Activated B cell treated with CpG ODN at 0.5 μM for 24 hours (primary cell): ENCODE measurements at regions of chr2 and their contacts with region 1.

Region 1: DNA sequence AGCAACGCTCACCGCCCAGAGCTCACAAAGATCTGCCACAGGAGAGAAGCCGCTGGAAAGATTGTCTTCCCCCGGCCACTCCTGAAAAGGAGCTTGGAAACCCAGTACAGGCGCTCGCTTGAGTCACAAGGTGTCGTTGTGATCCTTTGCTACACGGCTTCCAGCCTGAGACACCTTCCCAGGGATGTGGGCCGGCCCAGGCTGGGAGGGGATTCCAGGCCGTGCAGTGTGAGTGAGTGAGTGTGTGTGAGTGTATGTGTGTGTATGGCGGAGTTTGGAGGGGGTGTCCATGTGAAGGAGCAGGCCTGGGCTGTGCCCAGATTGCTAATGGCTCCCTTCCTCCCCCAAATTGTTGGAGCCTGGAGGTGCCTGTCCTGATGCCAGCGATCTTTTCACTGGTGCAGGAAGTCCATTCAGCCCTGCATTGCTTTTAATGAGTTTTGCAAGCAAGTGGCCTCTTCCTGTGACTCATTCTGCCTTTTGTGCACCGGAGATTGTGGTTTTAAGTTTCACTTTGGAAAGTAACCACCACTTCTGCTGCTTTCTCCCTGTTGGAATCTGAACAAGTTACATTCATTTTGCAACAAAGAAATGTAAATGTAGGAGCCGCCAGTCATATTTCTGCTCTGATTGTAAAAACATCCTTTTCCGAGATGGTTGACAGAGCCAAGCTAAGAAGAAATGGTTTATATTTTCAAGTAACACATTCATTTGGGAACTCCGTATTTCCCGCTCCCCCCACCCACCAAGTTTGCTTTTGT is 83.7 kb downstream of the LPIN1 start:
- DNase-seq: peak; percentile 40
- ATAC-seq: peak; percentile 66
- H3K4me3 Mint-ChIP-seq: peak overlapping the region; percentile 75
- H3K27ac Mint-ChIP-seq: peak overlapping the region; percentile 75
- H3K4me1 Mint-ChIP-seq: peaks cover 64% of the 10 kb centered on the region
- H3K27me3 Mint-ChIP-seq: no peaks in the 10 kb centered on the region
- CTCF ChIP-seq: no peak

Region 2: GRCh38 chr2:11802782-11803191 is 27.3 kb before region 1 on chr2:
- CTCF ChIA-PET with region 1: no interaction called
- POLR2A ChIA-PET with region 1: no interaction called
- intact Hi-C with region 1: no loop called
- DNase-seq: no peak
- ATAC-seq: no peak
- H3K4me3 Mint-ChIP-seq: no peak overlapping the region
- H3K27ac Mint-ChIP-seq: no peak overlapping the region
- H3K4me1 Mint-ChIP-seq: no peaks in the 10 kb centered on the region
- H3K27me3 Mint-ChIP-seq: no peaks in the 10 kb centered on the region
- CTCF ChIP-seq: no peak

Region 3: GRCh38 chr2:11904029-11904428 is 73.9 kb after region 1 on chr2:
- CTCF ChIA-PET with region 1: no interaction called
- POLR2A ChIA-PET with region 1: no interaction called
- intact Hi-C with region 1: loop called (anchors 2 kb)
- DNase-seq: peak; percentile 29
- ATAC-seq: peak; percentile 98
- H3K4me3 Mint-ChIP-seq: no peak overlapping the region
- H3K27ac Mint-ChIP-seq: peak overlapping the region; percentile 67
- H3K4me1 Mint-ChIP-seq: peaks cover 24% of the 10 kb centered on the region
- H3K27me3 Mint-ChIP-seq: no peaks in the 10 kb centered on the region
- CTCF ChIP-seq: no peak

Region 4: GRCh38 chr2:12044857-12045256 is 214.7 kb after region 1 on chr2:
- CTCF ChIA-PET with region 1: interaction called, 4 read pairs
- POLR2A ChIA-PET with region 1: no interaction called
- intact Hi-C with region 1: loop called (anchors 5 kb)
- DNase-seq: no peak
- ATAC-seq: peak; percentile 89
- H3K4me3 Mint-ChIP-seq: peak overlapping the region; percentile 44
- H3K27ac Mint-ChIP-seq: peak overlapping the region; percentile 68
- H3K4me1 Mint-ChIP-seq: peaks cover 97% of the 10 kb centered on the region
- H3K27me3 Mint-ChIP-seq: no peaks in the 10 kb centered on the region
- CTCF ChIP-seq: no peak

Region 5: DNA sequence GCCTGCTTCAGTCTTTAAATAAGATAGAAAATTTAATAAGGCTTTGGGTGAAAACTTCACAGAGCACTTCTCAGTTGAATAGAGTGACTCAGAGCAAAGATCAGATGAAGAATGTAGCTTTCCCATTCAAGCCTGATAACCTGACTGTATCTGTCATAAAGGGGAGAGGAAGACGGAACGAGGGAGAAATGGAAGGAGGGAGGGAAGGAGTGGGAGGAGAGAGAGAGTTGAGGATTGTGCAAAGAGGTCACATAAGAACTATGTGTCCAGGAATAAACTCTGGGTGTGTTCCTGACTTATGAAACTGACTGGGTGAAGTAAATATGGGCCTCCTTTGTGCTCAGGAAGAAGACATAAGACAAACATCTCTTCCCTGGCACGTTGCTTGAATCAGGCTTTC is 301.8 kb after region 1 on chr2:
- CTCF ChIA-PET with region 1: no interaction called
- POLR2A ChIA-PET with region 1: no interaction called
- intact Hi-C with region 1: no loop called
- DNase-seq: no peak
- ATAC-seq: no peak
- H3K4me3 Mint-ChIP-seq: no peak overlapping the region
- H3K27ac Mint-ChIP-seq: no peak overlapping the region
- H3K4me1 Mint-ChIP-seq: no peaks in the 10 kb centered on the region
- H3K27me3 Mint-ChIP-seq: no peaks in the 10 kb centered on the region
- CTCF ChIP-seq: no peak

Region 6: DNA sequence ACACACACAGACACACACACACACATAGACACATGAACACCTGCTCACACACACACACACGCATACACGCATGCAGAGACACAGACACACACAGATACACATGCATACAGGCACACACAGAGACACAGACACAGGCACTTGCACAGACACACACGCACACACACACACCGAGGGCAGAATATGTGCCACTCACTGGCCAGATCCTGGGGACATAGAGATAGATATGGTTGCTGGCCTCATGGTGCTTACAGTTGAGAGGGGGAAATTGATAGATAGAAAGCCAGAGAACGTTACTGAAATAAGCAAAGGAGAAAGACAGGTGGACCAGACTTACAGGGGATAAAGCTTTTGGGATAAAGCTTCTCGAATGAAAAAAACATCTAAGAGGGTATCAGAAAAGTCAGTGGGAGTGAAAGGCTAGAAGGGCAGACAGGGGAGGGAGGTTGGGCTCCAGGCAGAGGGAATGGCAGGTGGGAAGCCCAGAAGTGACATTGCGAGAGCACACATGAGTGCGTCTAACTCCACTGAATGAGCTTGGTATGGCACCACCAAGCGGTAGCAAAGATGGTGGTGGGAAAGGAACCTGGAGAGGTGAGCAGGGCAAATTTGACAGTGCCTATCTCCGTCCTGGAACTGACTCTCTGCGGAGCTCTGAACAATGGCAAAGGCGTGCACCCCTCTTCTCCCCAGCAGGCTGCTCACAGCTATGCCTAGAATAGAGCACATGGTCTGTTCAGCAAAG is 496.5 kb after region 1 on chr2:
- CTCF ChIA-PET with region 1: interaction called, 5 read pairs
- POLR2A ChIA-PET with region 1: no interaction called
- intact Hi-C with region 1: loop called (anchors 1 kb)
- DNase-seq: no peak
- ATAC-seq: no peak
- H3K4me3 Mint-ChIP-seq: no peak overlapping the region
- H3K27ac Mint-ChIP-seq: no peak overlapping the region
- H3K4me1 Mint-ChIP-seq: peaks cover 26% of the 10 kb centered on the region
- H3K27me3 Mint-ChIP-seq: no peaks in the 10 kb centered on the region
- CTCF ChIP-seq: no peak

Region 7: GRCh38 chr2:12416600-12416999 is 586.5 kb after region 1 on chr2:
- CTCF ChIA-PET with region 1: no interaction called
- POLR2A ChIA-PET with region 1: no interaction called
- intact Hi-C with region 1: loop called (anchors 10 kb)
- DNase-seq: peak; percentile 22
- ATAC-seq: peak; percentile 69
- H3K4me3 Mint-ChIP-seq: no peak overlapping the region
- H3K27ac Mint-ChIP-seq: no peak overlapping the region
- H3K4me1 Mint-ChIP-seq: peaks cover 36% of the 10 kb centered on the region
- H3K27me3 Mint-ChIP-seq: no peaks in the 10 kb centered on the region
- CTCF ChIP-seq: no peak

Region 8: DNA sequence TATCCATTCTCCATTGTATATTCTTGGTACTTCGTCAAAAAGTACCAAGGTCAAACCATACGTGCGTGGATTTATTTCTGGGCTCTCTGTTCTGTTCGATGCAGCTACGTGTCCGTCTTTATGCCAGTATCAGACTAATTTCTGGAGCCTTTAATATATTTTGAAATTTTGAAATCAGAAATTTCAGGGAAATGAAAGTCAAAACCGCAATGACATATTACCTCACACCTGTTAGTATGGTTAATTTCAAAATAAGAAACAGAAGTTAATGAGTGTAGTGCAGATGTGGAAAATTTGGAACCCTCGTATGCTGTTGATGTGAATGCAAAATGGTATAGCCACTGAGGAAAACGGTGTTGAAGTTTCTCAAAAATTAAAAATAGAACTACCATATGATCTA is 730.5 kb after region 1 on chr2:
- CTCF ChIA-PET with region 1: no interaction called
- POLR2A ChIA-PET with region 1: no interaction called
- intact Hi-C with region 1: loop called (anchors 5 kb)
- DNase-seq: no peak
- ATAC-seq: peak; percentile 62
- H3K4me3 Mint-ChIP-seq: peak overlapping the region; percentile 19
- H3K27ac Mint-ChIP-seq: peak overlapping the region; percentile 25
- H3K4me1 Mint-ChIP-seq: peaks cover 27% of the 10 kb centered on the region
- H3K27me3 Mint-ChIP-seq: peaks cover 3% of the 10 kb centered on the region
- CTCF ChIP-seq: no peak

Region 9: GRCh38 chr2:12931186-12931844 is 1101.2 kb after region 1 on chr2:
- CTCF ChIA-PET with region 1: interaction called, 62 read pairs
- POLR2A ChIA-PET with region 1: no interaction called
- intact Hi-C with region 1: loop called (anchors 1 kb)
- DNase-seq: no peak
- ATAC-seq: peak; percentile 49
- H3K4me3 Mint-ChIP-seq: no peak overlapping the region
- H3K27ac Mint-ChIP-seq: no peak overlapping the region
- H3K4me1 Mint-ChIP-seq: peaks cover 15% of the 10 kb centered on the region
- H3K27me3 Mint-ChIP-seq: no peaks in the 10 kb centered on the region
- CTCF ChIP-seq: no peak